Heart left ventricle (tissue), 16 donors: ENCODE measurements at regions of chr20 and their contacts with region 1.

Region 1: DNA sequence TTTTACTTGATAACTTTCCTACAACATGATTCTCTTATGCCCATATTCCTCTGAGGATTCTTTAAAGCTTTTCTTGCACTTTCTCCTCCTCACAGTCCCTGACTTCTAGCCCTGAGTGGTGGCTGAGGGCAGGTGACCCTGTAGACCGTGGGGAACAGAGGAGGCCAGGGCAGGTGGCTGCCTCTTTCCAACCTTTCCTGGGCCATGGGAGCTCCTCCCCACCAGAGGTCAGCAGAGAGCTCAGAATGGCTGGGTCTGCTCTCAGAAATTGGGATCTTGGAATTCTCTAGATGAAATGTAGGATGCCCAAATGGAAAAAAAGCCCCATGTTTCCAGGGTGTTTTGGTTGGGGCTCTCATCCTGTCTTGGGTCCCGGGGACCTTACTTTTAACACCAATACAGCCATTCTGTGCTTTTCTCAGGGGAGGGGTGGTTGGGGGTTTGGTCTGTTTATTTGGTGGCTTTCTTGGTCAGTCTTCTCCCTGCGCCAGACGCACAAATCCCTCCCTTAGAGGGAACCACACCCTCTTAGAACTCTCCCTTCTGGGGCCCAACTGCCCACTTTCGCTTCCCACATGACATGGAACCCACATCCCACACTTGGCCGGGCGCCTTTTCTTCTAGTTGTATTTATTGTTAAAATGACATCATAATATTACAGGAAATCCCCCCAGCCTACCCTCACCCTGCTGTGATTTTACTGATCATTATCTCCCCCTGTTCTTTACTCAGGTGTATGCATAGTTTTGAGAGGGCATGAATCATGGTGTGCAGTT is 17.9 kb downstream of the GNAS start:
- DNase-seq: peak; percentile 64 to 80 (median 67)
- ATAC-seq: peak; percentile 59 to 90 (median 86)
- H3K4me3 ChIP-seq: no peak overlapping the region
- H3K27ac ChIP-seq: no peak overlapping the region
- H3K4me1 ChIP-seq: peaks cover 0 to 8% (median 0%) of the 10 kb centered on the region in 12 donors
- H3K27me3 ChIP-seq: no peaks in the 10 kb centered on the region
- CTCF ChIP-seq: peak; percentile 80 to 94 (median 91)
- POLR2A ChIP-seq: no peak

Region 2: GRCh38 chr20:59042796-59043660 is 172.6 kb after region 1 on chr20:
- intact Hi-C with region 1: loop called in 1 of 10 experiments (anchors 10 kb)
- DNase-seq: peak; percentile 94 to 97 (median 94)
- ATAC-seq: peak; percentile 95 to 99 (median 98)
- H3K4me3 ChIP-seq: peak overlapping the region; percentile 60 to 97 (median 76)
- H3K27ac ChIP-seq: peak overlapping the region; percentile 68 to 92 (median 86)
- H3K4me1 ChIP-seq: peaks cover 9 to 45% (median 28%) of the 10 kb centered on the region in 12 donors
- H3K27me3 ChIP-seq: no peaks in the 10 kb centered on the region
- CTCF ChIP-seq: peak in 1 of 12 donors; percentile 12
- POLR2A ChIP-seq: peak in 1 of 2 donors; percentile 57

Region 3: DNA sequence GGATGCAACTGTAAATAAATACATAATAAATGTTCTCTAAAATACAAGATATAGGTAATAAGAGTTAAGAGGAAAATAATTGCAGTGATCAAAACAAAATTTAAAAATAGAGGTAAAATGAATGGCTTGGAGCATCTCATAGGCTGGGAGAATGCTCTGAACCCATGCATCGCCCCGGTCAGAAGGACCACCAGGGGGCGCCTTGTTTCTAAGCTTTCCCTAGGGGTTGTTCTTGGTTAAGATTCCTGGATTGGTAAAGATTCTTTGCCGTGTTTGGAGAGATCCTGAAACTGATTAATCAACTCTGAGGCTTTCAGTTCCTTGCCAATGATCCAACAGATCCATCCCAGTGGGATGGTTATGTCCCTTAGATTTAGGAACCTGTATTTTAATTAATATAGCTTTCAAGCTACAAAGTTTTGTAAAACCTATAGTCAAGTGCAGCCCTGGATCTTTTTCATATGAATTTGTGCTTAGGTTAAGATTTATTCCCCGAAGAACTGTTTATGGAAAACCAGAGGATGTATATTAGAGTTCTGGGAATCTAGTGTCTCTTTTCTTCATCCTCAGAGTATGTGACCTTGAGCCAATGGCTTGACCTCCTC is 217.5 kb after region 1 on chr20:
- intact Hi-C with region 1: loop called in 6 of 10 experiments (anchors 2 to 10 kb)
- DNase-seq: peak; percentile 75 to 86 (median 82)
- ATAC-seq: peak in 3 of 4 donors; percentile 75 to 83 (median 81)
- H3K4me3 ChIP-seq: no peak overlapping the region
- H3K27ac ChIP-seq: no peak overlapping the region
- H3K4me1 ChIP-seq: peaks cover 0 to 9% (median 3%) of the 10 kb centered on the region in 12 donors
- H3K27me3 ChIP-seq: peaks cover 0 to 4% (median 0%) of the 10 kb centered on the region in 9 donors
- CTCF ChIP-seq: peak; percentile 85 to 98 (median 94)
- POLR2A ChIP-seq: no peak

Region 4: DNA sequence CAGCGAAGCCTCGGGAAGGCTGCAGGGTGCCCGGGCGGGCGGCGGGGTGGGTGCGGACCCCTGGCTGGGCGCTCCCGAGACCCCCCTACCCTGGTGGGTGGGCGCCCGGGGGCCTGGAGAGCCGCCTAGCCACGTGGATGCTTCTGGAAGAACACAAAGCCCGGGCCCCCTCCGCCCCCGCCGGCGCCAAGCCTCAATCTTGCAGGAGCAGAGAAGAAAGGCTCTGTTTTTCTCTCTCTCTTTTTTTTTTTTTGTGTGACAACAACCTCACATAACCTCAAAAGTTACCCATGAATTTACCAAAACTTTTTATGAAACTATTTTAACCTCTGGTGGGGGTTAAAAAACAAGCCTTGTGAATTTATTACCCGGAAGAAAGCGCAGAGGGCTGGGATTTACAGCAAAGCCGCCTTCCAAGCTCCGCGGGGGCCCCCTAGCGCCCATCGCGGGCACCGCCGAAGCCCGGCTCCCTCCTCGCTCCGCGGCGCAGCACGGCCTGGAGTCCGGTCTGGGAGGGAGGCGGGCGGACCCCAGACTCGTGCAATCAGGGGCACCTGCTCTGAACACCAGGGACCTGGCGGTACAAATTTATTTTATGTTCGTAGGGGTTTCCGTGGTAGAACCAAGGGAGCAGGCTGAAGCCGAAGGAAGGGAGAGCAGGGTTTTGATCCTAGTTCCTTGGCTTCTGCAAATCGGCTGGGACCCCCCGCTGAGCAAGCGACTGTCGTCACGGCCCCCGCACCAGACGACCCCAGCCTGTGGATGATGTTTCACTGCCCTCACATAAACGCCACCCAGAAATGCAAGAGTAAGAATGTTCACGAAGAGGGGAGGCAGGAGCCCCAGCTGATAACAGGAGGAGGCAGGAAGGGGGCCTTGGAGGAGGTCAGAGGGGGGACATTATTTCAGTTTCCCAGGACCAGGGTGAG is 352.1 kb after region 1 on chr20:
- intact Hi-C with region 1: loop called (anchors 1 to 5 kb)
- DNase-seq: peak; percentile 72 to 90 (median 81)
- ATAC-seq: peak; percentile 71 to 97 (median 92)
- H3K4me3 ChIP-seq: peak overlapping the region; percentile 21 to 66 (median 58)
- H3K27ac ChIP-seq: peak overlapping the region in 9 of 12 donors; percentile 7 to 87 (median 72)
- H3K4me1 ChIP-seq: peaks cover 0 to 26% (median 14%) of the 10 kb centered on the region in 12 donors
- H3K27me3 ChIP-seq: peaks cover 0 to 31% (median 15%) of the 10 kb centered on the region in 9 donors
- CTCF ChIP-seq: peak; percentile 92 to 99 (median 97)
- POLR2A ChIP-seq: no peak

Region 5: GRCh38 chr20:59455402-59456341 is 585.2 kb after region 1 on chr20:
- intact Hi-C with region 1: loop called in 4 of 10 experiments (anchors 2 to 5 kb)
- DNase-seq: peak in 1 of 5 donors; percentile 54
- ATAC-seq: peak in 3 of 4 donors; percentile 42 to 85 (median 69)
- H3K4me3 ChIP-seq: no peak overlapping the region
- H3K27ac ChIP-seq: no peak overlapping the region
- H3K4me1 ChIP-seq: peaks cover 0 to 6% (median 0%) of the 10 kb centered on the region in 12 donors
- H3K27me3 ChIP-seq: peaks cover 0 to 25% (median 0%) of the 10 kb centered on the region in 9 donors
- CTCF ChIP-seq: peak; percentile 34 to 66 (median 50)
- POLR2A ChIP-seq: no peak